Tibial artery (tissue), 4 donors: ENCODE measurements at regions of chr14 and their contacts with region 1.

Region 1: GRCh38 chr14:89237921-89238529 is 179.0 kb downstream of the FOXN3 start:
- DNase-seq: no peak
- H3K4me3 ChIP-seq: no peak overlapping the region
- H3K27ac ChIP-seq: peak overlapping the region in 1 of 2 donors; percentile 5
- H3K4me1 ChIP-seq: peaks cover 0 to 59% (median 33%) of the 10 kb centered on the region in 4 donors
- H3K27me3 ChIP-seq: no peaks in the 10 kb centered on the region
- CTCF ChIP-seq: peak; percentile 45 to 51

Region 2: GRCh38 chr14:89033756-89034155 is 204.3 kb before region 1 on chr14:
- intact Hi-C with region 1: loop called (anchors 10 kb)
- DNase-seq: no peak
- H3K4me3 ChIP-seq: no peak overlapping the region
- H3K27ac ChIP-seq: no peak overlapping the region
- H3K4me1 ChIP-seq: no peaks in the 10 kb centered on the region
- H3K27me3 ChIP-seq: peaks cover 0 to 3% of the 10 kb centered on the region in 2 donors
- CTCF ChIP-seq: no peak

Region 3: GRCh38 chr14:89146274-89146673 is 91.8 kb before region 1 on chr14:
- intact Hi-C with region 1: no loop called
- DNase-seq: no peak
- H3K4me3 ChIP-seq: no peak overlapping the region
- H3K27ac ChIP-seq: no peak overlapping the region
- H3K4me1 ChIP-seq: no peaks in the 10 kb centered on the region
- H3K27me3 ChIP-seq: no peaks in the 10 kb centered on the region
- CTCF ChIP-seq: no peak

Region 4: GRCh38 chr14:89303457-89304435 is 65.7 kb after region 1 on chr14:
- intact Hi-C with region 1: loop called (anchors 10 kb)
- DNase-seq: peak; percentile 76 to 87
- H3K4me3 ChIP-seq: peak overlapping the region; percentile 18 to 21
- H3K27ac ChIP-seq: peak overlapping the region; percentile 86 to 87
- H3K4me1 ChIP-seq: peaks cover 14 to 55% (median 25%) of the 10 kb centered on the region in 4 donors
- H3K27me3 ChIP-seq: no peaks in the 10 kb centered on the region
- CTCF ChIP-seq: no peak